ENCODE measurements at regions of chr1 and their contacts with region 1.

Region 1: GRCh38 chr1:159798893-159799292 is 3.3 kb upstream of the FCRL6 start:
- DNase-seq: peak; percentile 67
- CTCF ChIP-seq: peak; percentile 57

Region 2: GRCh38 chr1:159780583-159781582 is 18.0 kb before region 1 on chr1 and contains the start of gene DUSP23:
- CTCF ChIA-PET with region 1: interaction called, 15 read pairs
- POLR2A ChIA-PET with region 1: no interaction called
- DNase-seq: peak; percentile 97
- CTCF ChIP-seq: peak; percentile 68

Region 3: GRCh38 chr1:159856576-159856975 is 57.7 kb after region 1 on chr1:
- CTCF ChIA-PET with region 1: interaction called, 11 read pairs
- POLR2A ChIA-PET with region 1: no interaction called
- DNase-seq: no peak
- CTCF ChIP-seq: no peak

Region 4: GRCh38 chr1:159924981-159925712 is 126.3 kb after region 1 on chr1 and contains the start of gene TAGLN2:
- CTCF ChIA-PET with region 1: interaction called, 18 read pairs
- POLR2A ChIA-PET with region 1: no interaction called
- DNase-seq: peak; percentile 91
- CTCF ChIP-seq: no peak

Region 5: GRCh38 chr1:160018900-160019299 is 220.0 kb after region 1 on chr1:
- CTCF ChIA-PET with region 1: interaction called, 12 read pairs
- POLR2A ChIA-PET with region 1: no interaction called
- DNase-seq: no peak
- CTCF ChIP-seq: no peak